ENCODE measurements at regions of chr1 and their contacts with region 1.

Region 1: GRCh38 chr1:145996433-145997015 is at the start of gene TXNIP:
- DNase-seq: peak; percentile 99 to 100 (median 100)
- ATAC-seq: peak; percentile 85 to 98 (median 90)
- H3K4me3 ChIP-seq: peak within 1 kb of the TSS; percentile 59 to 94 (median 82)
- H3K27ac ChIP-seq: peak within 1 kb of the TSS; percentile 94 to 100 (median 97)
- H3K4me1 ChIP-seq: peaks cover 3 to 71% (median 43%) of the 10 kb centered on the region in 12 donors
- H3K27me3 ChIP-seq: no peaks in the 10 kb centered on the region
- CTCF ChIP-seq: no peak
- POLR2A ChIP-seq: peak; percentile 12 to 97
- total RNA-seq, gene TXNIP: 489 to 1,925 (median 1,000) TPM

Region 2: DNA sequence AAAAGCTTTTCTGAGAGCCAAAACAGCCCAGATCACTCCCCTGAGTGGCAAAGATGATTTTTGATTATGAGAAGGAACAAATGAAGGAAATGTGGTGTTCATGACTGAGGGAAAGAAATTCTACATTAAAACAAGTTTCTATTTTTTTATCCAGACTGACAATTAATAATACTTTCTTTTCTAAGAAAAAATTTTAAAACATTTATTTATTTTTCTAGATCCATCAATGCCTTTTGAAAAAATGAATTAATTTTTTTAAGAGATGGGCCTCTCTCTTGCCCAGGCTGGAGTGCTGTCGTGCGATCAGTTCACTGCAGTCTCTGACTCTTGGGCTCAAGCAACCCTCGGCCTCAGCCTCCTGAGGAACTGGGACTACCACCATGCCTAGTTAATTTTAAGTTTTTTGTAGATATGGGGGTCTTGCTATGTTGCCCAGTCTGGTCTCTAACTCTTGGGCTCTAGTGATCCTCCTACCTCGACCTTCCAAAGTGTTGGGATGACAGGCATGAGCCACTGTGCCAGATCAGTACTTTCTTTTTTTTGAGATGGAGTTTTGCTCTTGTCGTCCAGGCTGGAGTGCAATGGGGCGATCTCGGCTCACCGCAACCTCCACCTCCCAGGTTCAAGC is 11.1 kb after region 1 on chr1:
- intact Hi-C with region 1: loop called in 1 of 10 experiments (anchors 1 kb)
- DNase-seq: no peak
- ATAC-seq: peak in 1 of 4 donors; percentile 10
- H3K4me3 ChIP-seq: peak overlapping the region in 5 of 12 donors; percentile 8 to 27 (median 22)
- H3K27ac ChIP-seq: peak overlapping the region; percentile 31 to 94 (median 84)
- H3K4me1 ChIP-seq: peaks cover 2 to 62% (median 15%) of the 10 kb centered on the region in 12 donors
- H3K27me3 ChIP-seq: no peaks in the 10 kb centered on the region
- CTCF ChIP-seq: peak in 1 of 12 donors; percentile 19
- POLR2A ChIP-seq: no peak

Region 3: DNA sequence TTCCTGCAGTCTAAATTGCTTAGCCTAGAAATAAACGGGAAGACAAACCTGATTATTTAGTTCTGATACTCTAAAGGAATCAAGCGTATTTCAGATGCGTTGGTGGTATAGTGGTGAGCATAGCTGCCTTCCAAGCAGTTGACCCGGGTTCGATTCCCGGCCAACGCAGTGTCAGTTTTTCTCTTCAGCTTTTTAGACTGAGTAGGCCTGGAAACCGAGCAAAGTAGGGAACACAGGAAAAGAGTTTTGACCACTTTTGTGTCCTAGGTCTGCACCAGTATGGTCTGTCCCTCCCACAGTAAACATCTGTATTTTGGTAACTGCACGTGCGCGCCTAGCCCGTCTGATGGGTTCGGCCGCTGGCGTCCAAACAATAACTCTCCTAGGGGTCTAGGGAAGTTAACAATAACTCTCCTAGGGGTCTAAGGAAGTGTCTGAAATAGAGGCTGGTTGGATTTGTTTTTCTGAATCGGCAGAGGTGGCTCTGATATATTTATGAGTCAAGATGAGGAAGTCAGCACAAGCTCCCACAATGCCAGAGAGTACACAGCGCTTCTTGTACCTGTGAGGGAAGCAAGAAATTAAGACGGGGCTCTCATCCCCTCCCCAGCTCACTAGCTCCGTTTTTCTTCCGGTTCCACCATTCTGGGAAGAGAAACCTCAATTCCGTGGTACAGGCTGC is 40.6 kb after region 1 on chr1:
- intact Hi-C with region 1: no loop called
- DNase-seq: peak; percentile 73 to 81 (median 76)
- ATAC-seq: peak; percentile 38 to 73 (median 62)
- H3K4me3 ChIP-seq: peak overlapping the region; percentile 59 to 85 (median 66)
- H3K27ac ChIP-seq: peak overlapping the region; percentile 72 to 92 (median 86)
- H3K4me1 ChIP-seq: peaks cover 0 to 34% (median 7%) of the 10 kb centered on the region in 12 donors
- H3K27me3 ChIP-seq: no peaks in the 10 kb centered on the region
- CTCF ChIP-seq: no peak
- POLR2A ChIP-seq: no peak

Measured in heart left ventricle (tissue), 16 donors.